K562 (cell line): ENCODE measurements at regions of chr1 and their contacts with region 1.

Region 1: GRCh38 chr1:23344111-23344986 is at the start of gene HNRNPR:
- DNase-seq: peak; percentile 99 to 100 (median 100)
- ATAC-seq: peak; percentile 93
- H3K4me3 ChIP-seq: peak within 1 kb of the TSS; percentile 76
- H3K27ac ChIP-seq: peak within 1 kb of the TSS; percentile 99
- H3K4me1 ChIP-seq: peaks cover 15 to 26% of the 10 kb centered on the region in 2 experiments; a peak in 4 of 5 replicates
- H3K27me3 ChIP-seq: no peaks in the 10 kb centered on the region
- CTCF ChIP-seq: 0 out of 6 replicates have a peak, but pooled peaks of 1 of the 3 experiments have one; percentile 9
- EP300 ChIP-seq: no peak; the same call in 1 of the 2 replicates
- POLR2A ChIP-seq: peak; percentile 92
- RAD21 ChIP-seq: no peak; a peak in 1 of 4 replicates
- polyA plus RNA-seq, gene HNRNPR: 80.9 to 93.4 TPM

Region 2: DNA sequence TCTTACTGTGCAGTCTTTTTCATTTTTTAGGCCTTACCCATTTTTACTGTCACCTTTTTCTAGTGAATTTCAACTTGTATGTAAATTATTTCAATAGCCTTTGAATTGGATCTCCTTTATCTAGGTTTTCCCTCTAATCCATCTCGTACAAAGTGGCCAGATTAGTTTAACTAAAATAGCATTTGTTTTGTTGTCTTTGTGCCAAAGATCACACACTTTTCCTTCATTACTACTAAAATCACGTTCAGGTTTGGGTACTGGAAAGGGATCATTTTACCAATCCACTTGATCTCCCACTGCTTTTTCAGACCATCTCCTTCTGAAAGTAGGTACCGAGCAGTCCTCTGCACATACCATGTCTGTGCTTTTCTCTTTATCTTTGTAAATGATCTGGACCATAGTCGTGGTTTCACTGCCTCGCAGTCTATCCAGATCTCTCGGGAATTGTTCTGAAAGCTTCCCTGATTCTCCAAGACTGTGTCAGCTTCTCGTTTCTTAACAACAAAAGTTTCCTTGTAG is 305.0 kb before region 1 on chr1:
- CTCF ChIA-PET with region 1: no interaction called
- POLR2A ChIA-PET with region 1: no interaction called
- in situ Hi-C with region 1: no loop called
- intact Hi-C with region 1: no loop called
- DNase-seq: no peak
- ATAC-seq: peak; percentile 50; the same call in 2 of the 3 replicates
- H3K4me3 ChIP-seq: no peak overlapping the region
- H3K27ac ChIP-seq: no peak overlapping the region
- H3K4me1 ChIP-seq: 0 out of 5 replicates have a peak, but pooled peaks cover 0 to 7% of the 10 kb centered on the region in 2 experiments
- H3K27me3 ChIP-seq: no peaks in the 10 kb centered on the region
- CTCF ChIP-seq: no peak
- EP300 ChIP-seq: no peak
- POLR2A ChIP-seq: no peak
- RAD21 ChIP-seq: no peak

Region 3: GRCh38 chr1:23330846-23331245 is 13.5 kb before region 1 on chr1:
- CTCF ChIA-PET with region 1: interaction called, 4 read pairs
- POLR2A ChIA-PET with region 1: interaction called, 21 read pairs
- in situ Hi-C with region 1: no loop called
- intact Hi-C with region 1: no loop called
- DNase-seq: no peak
- ATAC-seq: no peak
- H3K4me3 ChIP-seq: no peak overlapping the region
- H3K27ac ChIP-seq: no peak overlapping the region
- H3K4me1 ChIP-seq: peaks cover 0 to 9% of the 10 kb centered on the region in 2 experiments; a peak in 1 of 5 replicates
- H3K27me3 ChIP-seq: no peaks in the 10 kb centered on the region
- CTCF ChIP-seq: no peak
- EP300 ChIP-seq: no peak
- POLR2A ChIP-seq: no peak
- RAD21 ChIP-seq: no peak

Region 4: GRCh38 chr1:23362218-23362713 is 17.9 kb after region 1 on chr1:
- CTCF ChIA-PET with region 1: no interaction called
- POLR2A ChIA-PET with region 1: interaction called, 35 read pairs
- in situ Hi-C with region 1: no loop called
- intact Hi-C with region 1: no loop called
- DNase-seq: peak in 2 of 4 experiments; percentile 8 to 40
- ATAC-seq: 0 out of 3 replicates have a peak, but pooled peaks have one; percentile 25
- H3K4me3 ChIP-seq: no peak overlapping the region
- H3K27ac ChIP-seq: no peak overlapping the region
- H3K4me1 ChIP-seq: peaks cover 0 to 10% of the 10 kb centered on the region in 2 experiments; a peak in 3 of 5 replicates
- H3K27me3 ChIP-seq: no peaks in the 10 kb centered on the region
- CTCF ChIP-seq: no peak
- EP300 ChIP-seq: no peak
- POLR2A ChIP-seq: peak; percentile 37; the same call in 1 of the 2 replicates
- RAD21 ChIP-seq: no peak

Region 5: GRCh38 chr1:23367791-23368561 is 23.6 kb after region 1 on chr1:
- CTCF ChIA-PET with region 1: no interaction called
- POLR2A ChIA-PET with region 1: interaction called, 27 read pairs
- in situ Hi-C with region 1: no loop called
- intact Hi-C with region 1: loop called (anchors 1 kb)
- DNase-seq: peak; percentile 99 to 100 (median 100)
- ATAC-seq: peak; percentile 91
- H3K4me3 ChIP-seq: peak overlapping the region; percentile 58
- H3K27ac ChIP-seq: peak overlapping the region; percentile 97
- H3K4me1 ChIP-seq: peaks cover 23 to 36% of the 10 kb centered on the region in 2 experiments
- H3K27me3 ChIP-seq: no peaks in the 10 kb centered on the region
- CTCF ChIP-seq: peak in 1 of 3 experiments; percentile 27; a peak in 2 of 6 replicates
- EP300 ChIP-seq: no peak; the same call in 1 of the 2 replicates
- POLR2A ChIP-seq: peak; percentile 83
- RAD21 ChIP-seq: no peak